ENCODE measurements at regions of chr1 and their contacts with region 1.

Region 1: DNA sequence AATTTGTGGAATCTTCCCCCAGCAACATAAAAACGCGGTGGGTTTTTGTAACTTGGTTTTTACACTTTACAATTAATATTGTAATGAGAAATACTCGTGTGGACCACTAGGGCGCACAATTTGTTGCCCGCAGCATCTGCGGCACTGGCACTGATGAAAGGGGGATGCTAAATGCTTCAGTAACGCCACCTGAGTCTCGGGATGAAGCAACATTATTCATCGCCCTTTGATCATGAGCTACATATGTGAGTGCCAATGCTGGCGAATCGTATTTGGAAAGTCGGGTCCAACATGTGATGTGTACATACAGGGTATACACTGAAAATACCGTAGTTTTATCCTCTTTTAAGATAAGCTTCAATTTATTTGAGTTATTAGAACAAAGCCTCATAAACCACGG is 34.2 kb upstream of the COX20 start:
- DNase-seq: no peak
- ATAC-seq: no peak
- H3K4me3 ChIP-seq: no peak overlapping the region
- H3K27ac ChIP-seq: no peak overlapping the region
- H3K4me1 ChIP-seq: no peaks in the 10 kb centered on the region
- H3K27me3 ChIP-seq: no peaks in the 10 kb centered on the region

Region 2: GRCh38 chr1:244552340-244552739 is 248.9 kb before region 1 on chr1:
- intact Hi-C with region 1: no loop called
- DNase-seq: no peak
- ATAC-seq: no peak
- H3K4me3 ChIP-seq: no peak overlapping the region
- H3K27ac ChIP-seq: no peak overlapping the region
- H3K4me1 ChIP-seq: no peaks in the 10 kb centered on the region
- H3K27me3 ChIP-seq: peaks cover 0 to 2% of the 10 kb centered on the region in 2 donors

Region 3: DNA sequence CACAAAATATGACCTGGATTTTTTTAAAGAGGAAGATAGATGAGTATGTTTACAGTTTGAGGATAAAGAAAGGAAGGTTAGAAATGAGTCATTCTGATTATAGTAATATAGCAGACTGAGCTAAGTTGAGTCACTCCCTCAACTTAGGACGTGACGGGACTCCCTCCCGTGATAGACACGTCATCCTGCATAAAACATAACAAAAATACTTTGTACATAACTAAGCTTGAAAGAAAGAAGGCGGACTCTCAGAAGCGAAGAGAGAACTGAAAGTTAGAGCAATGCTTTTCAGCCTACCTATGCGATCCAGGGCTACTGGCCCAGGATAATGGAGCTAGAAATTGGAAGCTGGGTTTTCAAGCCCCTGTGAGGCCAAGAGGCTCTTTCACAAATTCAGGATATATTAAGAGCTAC is 201.3 kb before region 1 on chr1:
- intact Hi-C with region 1: loop called (anchors 2 kb)
- DNase-seq: peak; percentile 67 to 73
- ATAC-seq: peak; percentile 63
- H3K4me3 ChIP-seq: no peak overlapping the region
- H3K27ac ChIP-seq: no peak overlapping the region
- H3K4me1 ChIP-seq: no peaks in the 10 kb centered on the region
- H3K27me3 ChIP-seq: no peaks in the 10 kb centered on the region

Region 4: GRCh38 chr1:244705261-244706234 is 95.7 kb before region 1 on chr1:
- intact Hi-C with region 1: no loop called
- DNase-seq: no peak
- ATAC-seq: no peak
- H3K4me3 ChIP-seq: no peak overlapping the region
- H3K27ac ChIP-seq: no peak overlapping the region
- H3K4me1 ChIP-seq: no peaks in the 10 kb centered on the region
- H3K27me3 ChIP-seq: no peaks in the 10 kb centered on the region